ENCODE measurements at regions of chr7 and their contacts with region 1.

Region 1: GRCh38 chr7:100190048-100190711 is 12.5 kb downstream of the STAG3 start:
- DNase-seq: no peak
- H3K4me3 Mint-ChIP-seq: no peak overlapping the region
- H3K27ac Mint-ChIP-seq: no peak overlapping the region
- H3K4me1 Mint-ChIP-seq: peaks cover 18% of the 10 kb centered on the region
- H3K27me3 Mint-ChIP-seq: no peaks in the 10 kb centered on the region

Region 2: GRCh38 chr7:100208911-100209408 is 18.8 kb after region 1 on chr7:
- CTCF ChIA-PET with region 1: interaction called, 11 read pairs
- POLR2A ChIA-PET with region 1: no interaction called
- intact Hi-C with region 1: loop called (anchors 1 kb)
- DNase-seq: peak; percentile 80
- H3K4me3 Mint-ChIP-seq: peak overlapping the region; percentile 58
- H3K27ac Mint-ChIP-seq: peak overlapping the region; percentile 76
- H3K4me1 Mint-ChIP-seq: peaks cover 43% of the 10 kb centered on the region
- H3K27me3 Mint-ChIP-seq: no peaks in the 10 kb centered on the region

Measured in activated CD4-positive, alpha-beta memory T cell treated with anti-CD3 and anti-CD28 coated beads for 36 hours (primary cell).